PC-9 (cell line): ENCODE measurements at regions of chr19 and their contacts with region 1.

Region 1: GRCh38 chr19:17305517-17306284 is at the start of gene MRPL34:
- DNase-seq: peak; percentile 99 to 100
- H3K4me3 ChIP-seq: peak within 1 kb of the TSS; percentile 78
- H3K27ac ChIP-seq: peak within 1 kb of the TSS; percentile 30; the same call in 1 of the 2 replicates
- H3K4me1 ChIP-seq: peaks cover 45% of the 10 kb centered on the region
- H3K27me3 ChIP-seq: no peaks in the 10 kb centered on the region
- CTCF ChIP-seq: peak; percentile 78
- total RNA-seq, gene MRPL34: 64.8 and 70.8 TPM in 2 replicates

Region 2: DNA sequence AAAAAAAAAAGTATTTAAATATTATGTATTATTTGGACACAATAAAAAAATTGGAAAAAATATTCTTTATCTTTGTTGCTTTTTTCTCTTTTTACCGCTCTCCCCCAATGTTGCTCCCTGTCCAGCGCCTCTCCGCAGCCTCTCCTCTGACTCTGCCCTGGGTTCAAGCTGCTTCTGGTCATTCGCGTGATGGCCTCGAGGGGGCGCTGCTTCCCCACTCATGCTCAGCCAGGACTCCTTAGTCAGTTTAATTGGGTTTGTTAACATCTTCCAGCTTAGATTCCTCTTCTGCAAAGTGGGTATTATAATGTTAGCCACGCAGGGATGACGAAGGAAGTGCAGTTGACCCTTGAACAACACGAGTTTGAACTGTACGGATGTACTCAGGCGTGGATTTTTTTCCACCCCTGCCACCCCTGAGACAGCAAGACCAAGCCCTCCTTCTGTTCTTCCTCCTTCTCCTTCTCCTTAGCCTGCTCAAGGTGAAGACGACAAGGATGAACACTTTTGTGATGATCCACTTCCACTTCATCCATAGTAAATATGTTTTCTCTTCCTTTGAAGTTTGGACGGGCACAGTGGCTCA is 590.9 kb before region 1 on chr19:
- CTCF ChIA-PET with region 1: no interaction called
- POLR2A ChIA-PET with region 1: no interaction called
- intact Hi-C with region 1: loop called (anchors 10 kb)
- DNase-seq: peak; percentile 43 to 57
- H3K4me3 ChIP-seq: no peak overlapping the region
- H3K27ac ChIP-seq: no peak overlapping the region
- H3K4me1 ChIP-seq: peaks cover 24% of the 10 kb centered on the region
- H3K27me3 ChIP-seq: no peaks in the 10 kb centered on the region
- CTCF ChIP-seq: peak; percentile 100

Region 3: DNA sequence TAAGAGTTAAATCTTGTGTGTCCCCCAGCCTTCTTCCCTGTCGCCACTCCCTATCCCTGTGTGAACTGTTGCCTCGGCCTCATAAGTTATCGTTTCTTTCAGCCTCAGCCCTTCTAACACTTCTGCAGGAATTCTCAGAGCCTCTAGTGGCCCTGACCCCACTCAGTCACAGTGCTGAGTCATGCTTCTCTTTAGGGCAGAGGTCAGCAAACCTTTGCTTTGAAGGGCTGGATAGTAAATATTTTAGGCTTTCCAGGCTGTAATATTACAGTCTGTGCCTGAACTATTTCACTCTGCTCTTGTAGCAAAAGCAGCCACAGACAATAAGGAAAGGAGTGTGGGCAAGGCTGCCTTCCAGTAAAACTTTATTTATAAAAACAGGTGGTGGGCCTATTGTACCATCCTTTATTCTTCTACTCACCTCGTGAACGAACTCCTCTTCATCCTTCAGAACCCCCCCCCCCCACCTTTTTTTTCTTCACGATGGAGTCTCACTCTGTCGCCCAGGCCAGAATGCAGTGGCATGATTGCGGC is 208.0 kb before region 1 on chr19:
- CTCF ChIA-PET with region 1: no interaction called
- POLR2A ChIA-PET with region 1: no interaction called
- intact Hi-C with region 1: no loop called
- DNase-seq: peak; percentile 47 to 79
- H3K4me3 ChIP-seq: peak overlapping the region; percentile 3; the same call in 1 of the 2 replicates
- H3K27ac ChIP-seq: peak overlapping the region; percentile 73
- H3K4me1 ChIP-seq: peaks cover 20% of the 10 kb centered on the region
- H3K27me3 ChIP-seq: no peaks in the 10 kb centered on the region
- CTCF ChIP-seq: no peak

Region 4: DNA sequence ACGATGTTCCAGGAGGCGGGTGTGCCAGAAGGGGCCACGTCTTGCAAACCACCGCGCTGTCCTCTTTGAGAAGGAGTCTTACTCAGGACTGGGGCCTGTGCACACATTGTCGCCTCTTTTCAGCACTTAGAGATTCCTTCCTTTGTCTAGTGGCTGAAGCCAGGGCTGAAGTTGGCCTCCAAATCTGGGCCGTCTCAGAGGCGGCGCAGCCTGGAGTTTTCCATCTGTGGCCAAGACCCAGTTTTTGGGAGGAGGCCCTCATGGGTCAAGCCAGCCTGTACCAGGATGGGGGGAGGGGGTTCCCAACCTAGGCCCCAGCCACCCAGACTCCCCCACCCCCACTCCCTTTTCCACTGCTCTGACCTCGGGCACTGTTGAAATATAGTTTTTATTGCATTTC is 17.2 kb after region 1 on chr19:
- CTCF ChIA-PET with region 1: no interaction called
- POLR2A ChIA-PET with region 1: interaction called, 12 read pairs
- intact Hi-C with region 1: loop called (anchors 1 kb)
- DNase-seq: no peak
- H3K4me3 ChIP-seq: no peak overlapping the region
- H3K27ac ChIP-seq: no peak overlapping the region
- H3K4me1 ChIP-seq: peaks cover 27% of the 10 kb centered on the region
- H3K27me3 ChIP-seq: no peaks in the 10 kb centered on the region
- CTCF ChIP-seq: no peak

Region 5: GRCh38 chr19:17336872-17337722 is 31.4 kb after region 1 on chr19 and contains the start of gene GTPBP3:
- CTCF ChIA-PET with region 1: no interaction called
- POLR2A ChIA-PET with region 1: interaction called, 20 read pairs
- intact Hi-C with region 1: loop called (anchors 1 kb)
- DNase-seq: peak; percentile 94 to 99
- H3K4me3 ChIP-seq: peak within 1 kb of the TSS; percentile 74
- H3K27ac ChIP-seq: peak within 1 kb of the TSS; percentile 62
- H3K4me1 ChIP-seq: peaks cover 32% of the 10 kb centered on the region
- H3K27me3 ChIP-seq: no peaks in the 10 kb centered on the region
- CTCF ChIP-seq: no peak
- total RNA-seq, gene GTPBP3: 48.8 and 50.7 TPM in 2 replicates

Region 6: DNA sequence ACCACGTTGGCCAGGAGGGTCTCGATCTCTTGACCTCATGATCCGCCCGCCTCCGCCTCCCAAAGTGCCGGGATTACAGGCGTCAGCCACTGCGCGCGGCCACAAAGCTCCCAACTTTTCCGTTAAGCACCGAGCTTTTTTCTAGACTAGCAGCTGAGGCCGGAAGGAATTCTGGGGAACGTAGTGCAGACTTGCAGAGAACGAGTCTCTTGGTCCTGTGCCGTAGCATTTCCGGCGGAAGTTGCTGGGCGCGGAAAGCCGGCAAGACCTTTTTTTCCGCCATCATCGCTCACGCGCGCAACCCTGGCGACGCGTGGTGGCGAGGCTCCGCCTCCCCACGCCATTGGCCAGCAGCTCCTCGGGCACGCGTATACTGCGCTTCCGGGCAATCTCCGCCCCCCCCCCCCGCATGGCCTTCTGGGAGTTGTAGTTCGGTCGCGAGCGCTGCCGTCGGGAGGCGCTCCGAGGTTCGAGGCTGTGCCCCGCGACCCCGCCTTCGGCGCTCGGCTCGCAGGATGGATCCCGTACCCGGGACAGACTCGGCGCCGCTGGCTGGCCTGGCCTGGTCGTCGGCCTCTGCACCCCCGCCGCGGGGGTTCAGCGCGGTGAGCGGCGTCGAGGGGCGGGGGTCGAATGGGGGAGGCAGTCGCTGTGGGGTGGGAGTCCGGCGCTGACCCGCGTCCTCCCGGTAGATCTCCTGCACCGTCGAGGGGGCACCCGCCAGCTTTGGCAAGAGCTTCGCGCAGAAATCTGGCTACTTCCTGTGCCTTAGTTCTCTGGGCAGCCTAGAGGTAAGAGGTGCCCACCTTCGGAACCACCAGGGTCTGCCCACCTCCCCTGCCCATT is 114.1 kb after region 1 on chr19 and contains the start of gene MVB12A:
- CTCF ChIA-PET with region 1: interaction called, 11 read pairs
- POLR2A ChIA-PET with region 1: interaction called, 6 read pairs
- intact Hi-C with region 1: no loop called
- DNase-seq: peak; percentile 96 to 98
- H3K4me3 ChIP-seq: peak within 1 kb of the TSS; percentile 82
- H3K27ac ChIP-seq: peak within 1 kb of the TSS; percentile 56
- H3K4me1 ChIP-seq: peaks cover 15% of the 10 kb centered on the region
- H3K27me3 ChIP-seq: no peaks in the 10 kb centered on the region
- CTCF ChIP-seq: no peak
- total RNA-seq, gene MVB12A: 58.1 and 80.0 TPM in 2 replicates

Region 7: DNA sequence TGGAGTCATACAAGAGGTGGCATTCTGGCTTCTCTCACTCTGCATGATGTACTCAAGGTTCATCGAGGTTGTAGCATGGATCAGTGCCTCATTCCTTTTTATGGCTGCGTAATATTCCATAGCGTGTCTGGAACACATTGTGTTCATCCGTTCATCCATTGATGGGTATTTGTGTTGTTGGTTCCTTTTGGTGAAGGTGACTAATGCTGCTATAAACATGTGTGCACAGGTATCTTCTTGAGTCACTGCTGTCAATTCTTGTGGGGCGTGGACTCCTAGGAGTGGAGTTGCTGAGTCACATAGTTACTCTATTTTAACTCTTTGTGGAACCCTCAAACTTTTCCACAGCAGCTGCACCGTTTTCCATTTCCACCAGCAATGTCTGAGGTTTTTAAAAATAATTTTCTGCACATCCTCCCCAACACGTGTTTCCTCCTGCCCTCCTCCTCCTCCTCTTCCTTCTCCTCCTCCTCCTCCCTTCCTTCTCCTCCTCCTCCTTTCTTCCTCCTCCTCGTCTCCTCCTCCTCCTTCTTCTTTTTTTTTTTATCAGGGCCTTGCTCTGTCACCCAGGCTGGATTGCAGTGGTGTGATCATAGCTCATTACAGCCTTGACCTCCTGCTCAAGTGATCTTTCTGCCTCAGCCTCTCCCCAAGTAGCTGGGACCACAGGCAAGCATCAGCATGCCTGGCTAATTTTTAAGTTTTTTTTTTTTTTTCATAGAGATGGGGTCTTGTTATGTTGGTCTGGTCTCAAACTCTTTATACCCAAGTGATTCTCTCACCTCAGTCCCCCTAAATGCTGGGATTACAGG is 144.8 kb after region 1 on chr19:
- CTCF ChIA-PET with region 1: no interaction called
- POLR2A ChIA-PET with region 1: no interaction called
- intact Hi-C with region 1: no loop called
- DNase-seq: peak; percentile 56 to 94
- H3K4me3 ChIP-seq: no peak overlapping the region
- H3K27ac ChIP-seq: peak overlapping the region; percentile 75
- H3K4me1 ChIP-seq: peaks cover 14% of the 10 kb centered on the region
- H3K27me3 ChIP-seq: no peaks in the 10 kb centered on the region
- CTCF ChIP-seq: no peak